ENCODE measurements at regions of chr9 and their contacts with region 1.

Region 1: GRCh38 chr9:89952401-89952800 is 347.6 kb downstream of the GADD45G start:
- DNase-seq: no peak
- H3K4me3 Mint-ChIP-seq: no peak overlapping the region
- H3K27ac Mint-ChIP-seq: peak overlapping the region; percentile 64
- H3K4me1 Mint-ChIP-seq: peaks cover 22% of the 10 kb centered on the region
- H3K27me3 Mint-ChIP-seq: peaks cover 2% of the 10 kb centered on the region

Region 2: GRCh38 chr9:89919169-89919681 is 33.2 kb before region 1 on chr9:
- CTCF ChIA-PET with region 1: interaction called, 4 read pairs
- POLR2A ChIA-PET with region 1: interaction called, 5 read pairs
- intact Hi-C with region 1: loop called (anchors 1 kb)
- DNase-seq: peak; percentile 71
- H3K4me3 Mint-ChIP-seq: no peak overlapping the region
- H3K27ac Mint-ChIP-seq: peak overlapping the region; percentile 4
- H3K4me1 Mint-ChIP-seq: peaks cover 15% of the 10 kb centered on the region
- H3K27me3 Mint-ChIP-seq: no peaks in the 10 kb centered on the region

Region 3: DNA sequence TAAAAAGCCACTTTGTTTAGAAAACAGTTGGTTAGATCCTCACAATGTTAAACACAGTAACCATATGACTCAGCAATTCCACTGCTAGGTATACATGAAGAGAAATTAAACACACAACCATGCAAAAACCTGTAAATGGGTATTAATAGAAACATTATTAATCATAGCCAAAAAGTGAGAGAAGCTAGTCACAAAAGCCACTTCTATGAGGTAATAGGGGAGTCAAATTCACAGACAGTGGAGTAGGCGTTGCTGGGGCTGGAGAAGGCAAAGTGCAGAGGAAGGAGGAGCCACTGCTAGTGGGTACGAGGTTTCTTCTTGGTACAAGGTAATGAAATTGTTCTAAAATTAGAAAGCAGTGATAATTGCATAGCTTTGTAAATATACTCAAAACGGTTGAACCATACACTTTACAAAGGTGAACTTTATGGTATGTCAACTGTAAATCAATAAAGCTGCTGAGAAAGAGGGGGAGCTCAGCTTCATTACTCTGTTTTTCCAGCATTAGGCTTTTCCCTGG is 16.8 kb after region 1 on chr9:
- CTCF ChIA-PET with region 1: no interaction called
- POLR2A ChIA-PET with region 1: interaction called, 3 read pairs
- intact Hi-C with region 1: loop called (anchors 2 kb)
- DNase-seq: peak; percentile 56
- H3K4me3 Mint-ChIP-seq: no peak overlapping the region
- H3K27ac Mint-ChIP-seq: no peak overlapping the region
- H3K4me1 Mint-ChIP-seq: peaks cover 30% of the 10 kb centered on the region
- H3K27me3 Mint-ChIP-seq: peaks cover 4% of the 10 kb centered on the region

Region 4: GRCh38 chr9:90044710-90045151 is 92.3 kb after region 1 on chr9:
- CTCF ChIA-PET with region 1: no interaction called
- POLR2A ChIA-PET with region 1: no interaction called
- intact Hi-C with region 1: no loop called
- DNase-seq: peak; percentile 61
- H3K4me3 Mint-ChIP-seq: no peak overlapping the region
- H3K27ac Mint-ChIP-seq: peak overlapping the region; percentile 4
- H3K4me1 Mint-ChIP-seq: peaks cover 23% of the 10 kb centered on the region
- H3K27me3 Mint-ChIP-seq: peaks cover 3% of the 10 kb centered on the region